ENCODE measurements at regions of chr16 and their contacts with region 1.

Region 1: DNA sequence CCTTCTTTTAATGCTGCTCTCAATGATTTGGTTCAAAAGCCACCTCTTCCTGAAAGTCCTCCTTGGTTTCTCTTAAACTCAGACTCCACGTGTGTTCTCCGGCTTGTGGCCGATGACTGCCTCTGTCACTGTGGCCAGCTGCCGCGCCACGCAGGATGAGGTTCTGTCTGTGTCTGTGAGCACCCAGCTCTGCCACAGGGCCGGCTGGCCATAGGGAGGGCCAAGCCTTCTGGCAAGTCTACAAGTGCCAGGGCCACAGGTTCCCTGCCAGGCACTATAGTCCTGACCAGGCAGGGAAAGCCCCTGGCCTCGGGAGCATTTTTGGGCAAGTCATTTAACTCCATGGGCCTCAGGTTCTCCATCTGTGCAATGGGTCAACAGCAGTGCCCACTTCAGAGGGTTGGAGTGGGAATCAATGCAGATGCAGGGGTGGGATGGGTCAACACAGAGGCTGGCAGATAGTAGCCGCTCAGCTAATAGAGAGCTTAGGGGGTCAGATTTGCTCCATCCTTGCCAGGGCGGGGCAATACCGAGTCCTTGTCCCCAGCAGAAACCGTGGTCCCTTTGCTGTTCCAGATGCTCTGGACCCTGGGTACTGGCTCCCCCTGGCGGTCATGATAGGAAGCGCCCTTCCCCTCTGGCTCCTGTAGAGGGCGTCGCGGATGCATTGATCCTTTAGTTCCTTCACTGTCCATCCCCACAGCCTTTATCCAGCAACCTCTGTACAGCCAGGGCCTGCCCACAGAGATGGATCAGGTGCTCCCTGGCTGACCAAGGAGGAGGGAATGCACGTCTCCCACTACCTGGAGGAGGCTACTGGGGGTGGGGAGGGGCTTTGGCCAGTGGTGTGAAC is 19.3 kb upstream of the ADGRG3 start:
- DNase-seq: peak; percentile 69 to 82
- ATAC-seq: peak; percentile 70 to 77 (median 76)
- H3K4me3 ChIP-seq: no peak overlapping the region
- H3K27ac ChIP-seq: peak overlapping the region; percentile 50
- H3K4me1 ChIP-seq: no peaks in the 10 kb centered on the region
- H3K27me3 ChIP-seq: peaks cover 0 to 5% (median 0%) of the 10 kb centered on the region in 3 donors
- CTCF ChIP-seq: peak; percentile 95

Region 2: GRCh38 chr16:57576429-57576870 is 72.4 kb before region 1 on chr16:
- intact Hi-C with region 1: loop called in 1 of 2 experiments (anchors 5 kb)
- DNase-seq: peak; percentile 67 to 82
- ATAC-seq: peak; percentile 62 to 81 (median 70)
- H3K4me3 ChIP-seq: no peak overlapping the region
- H3K27ac ChIP-seq: no peak overlapping the region
- H3K4me1 ChIP-seq: no peaks in the 10 kb centered on the region
- H3K27me3 ChIP-seq: peaks cover 0 to 6% (median 3%) of the 10 kb centered on the region in 3 donors
- CTCF ChIP-seq: peak; percentile 84

Region 3: DNA sequence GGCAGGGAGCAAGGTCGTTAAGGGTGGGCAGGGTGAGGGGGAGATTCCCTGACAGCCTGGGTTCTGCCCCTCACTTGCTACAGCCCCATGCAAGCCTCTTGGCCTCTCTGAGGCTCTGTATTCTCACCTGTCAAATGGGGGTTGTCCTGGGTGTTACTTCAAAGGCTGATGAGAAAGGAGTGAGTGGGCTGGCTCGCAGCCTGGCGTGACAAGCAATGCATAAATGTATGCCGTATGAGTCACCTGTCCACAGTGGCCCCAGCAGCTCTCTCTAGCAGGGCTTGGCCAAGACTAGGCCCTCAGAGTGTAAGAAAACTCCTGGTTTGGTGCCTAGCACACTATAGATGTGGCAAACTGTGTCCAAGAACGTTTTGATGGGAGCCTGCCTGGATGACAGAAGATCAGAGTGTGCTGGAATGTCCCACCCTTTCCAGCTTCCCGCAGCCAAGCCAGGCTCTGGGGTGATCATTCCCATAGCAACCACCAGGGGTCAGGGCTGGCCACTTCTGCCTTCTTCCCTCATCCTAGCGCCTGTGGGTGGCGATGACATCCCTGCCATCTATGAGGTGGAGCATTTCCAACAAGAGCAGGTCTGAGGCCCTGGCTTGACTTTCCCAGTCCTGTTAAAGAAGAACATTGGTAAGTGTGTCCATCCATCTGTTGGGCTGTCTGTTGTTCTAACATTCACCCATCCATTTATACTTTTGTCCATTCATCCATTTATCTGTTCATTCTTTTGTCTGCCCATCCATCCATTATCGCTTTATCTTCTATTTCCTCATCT is 57.5 kb before region 1 on chr16:
- intact Hi-C with region 1: loop called (anchors 5 kb)
- DNase-seq: peak; percentile 61 to 71
- ATAC-seq: peak; percentile 66 to 87 (median 85)
- H3K4me3 ChIP-seq: no peak overlapping the region
- H3K27ac ChIP-seq: no peak overlapping the region
- H3K4me1 ChIP-seq: no peaks in the 10 kb centered on the region
- H3K27me3 ChIP-seq: peaks cover 0 to 7% (median 0%) of the 10 kb centered on the region in 3 donors
- CTCF ChIP-seq: peak; percentile 79

Region 4: DNA sequence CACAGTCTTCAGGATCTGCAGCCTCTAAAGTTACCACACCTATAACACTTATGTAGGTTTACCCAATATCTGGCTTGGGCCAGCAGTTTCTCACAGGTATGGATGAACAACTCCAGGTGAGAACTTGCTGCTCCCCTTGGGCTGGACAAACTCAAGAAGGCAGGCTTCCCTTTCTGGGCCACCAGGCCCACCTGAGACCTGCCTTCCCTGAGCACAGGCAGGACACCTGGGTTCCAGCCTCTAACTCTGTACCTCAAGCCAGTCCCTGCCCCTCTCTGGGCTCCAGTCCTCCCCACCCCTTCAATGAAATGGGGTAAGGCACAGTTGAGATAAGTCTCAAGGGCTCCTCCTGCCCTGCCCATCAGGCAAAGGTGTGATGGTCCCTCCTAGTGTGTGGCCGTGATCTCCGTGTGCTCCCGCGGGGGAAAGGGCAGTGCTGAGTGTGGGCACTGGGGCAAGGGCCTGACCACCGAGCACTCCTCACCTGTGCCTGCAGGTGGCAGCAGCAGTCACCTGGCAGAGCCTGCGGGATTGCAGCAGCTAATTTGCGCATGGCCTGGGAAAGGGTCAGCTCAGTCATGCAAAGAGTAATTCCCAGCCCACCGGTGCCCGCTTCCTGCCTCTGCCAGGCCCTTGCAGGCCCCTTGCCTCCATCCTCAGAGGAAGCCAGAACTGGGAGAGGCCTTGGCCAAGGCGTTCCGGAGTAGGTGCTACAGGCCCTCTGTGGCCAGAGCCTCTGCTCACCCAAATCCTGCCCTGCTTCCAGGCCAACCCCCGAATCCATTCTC is 48.6 kb before region 1 on chr16:
- intact Hi-C with region 1: loop called in 1 of 2 experiments (anchors 2 kb)
- DNase-seq: peak in 1 of 2 donors; percentile 72
- ATAC-seq: peak; percentile 57 to 69 (median 66)
- H3K4me3 ChIP-seq: no peak overlapping the region
- H3K27ac ChIP-seq: no peak overlapping the region
- H3K4me1 ChIP-seq: peaks cover 4% of the 10 kb centered on the region
- H3K27me3 ChIP-seq: peaks cover 0 to 14% (median 0%) of the 10 kb centered on the region in 3 donors
- CTCF ChIP-seq: peak; percentile 52

Region 5: DNA sequence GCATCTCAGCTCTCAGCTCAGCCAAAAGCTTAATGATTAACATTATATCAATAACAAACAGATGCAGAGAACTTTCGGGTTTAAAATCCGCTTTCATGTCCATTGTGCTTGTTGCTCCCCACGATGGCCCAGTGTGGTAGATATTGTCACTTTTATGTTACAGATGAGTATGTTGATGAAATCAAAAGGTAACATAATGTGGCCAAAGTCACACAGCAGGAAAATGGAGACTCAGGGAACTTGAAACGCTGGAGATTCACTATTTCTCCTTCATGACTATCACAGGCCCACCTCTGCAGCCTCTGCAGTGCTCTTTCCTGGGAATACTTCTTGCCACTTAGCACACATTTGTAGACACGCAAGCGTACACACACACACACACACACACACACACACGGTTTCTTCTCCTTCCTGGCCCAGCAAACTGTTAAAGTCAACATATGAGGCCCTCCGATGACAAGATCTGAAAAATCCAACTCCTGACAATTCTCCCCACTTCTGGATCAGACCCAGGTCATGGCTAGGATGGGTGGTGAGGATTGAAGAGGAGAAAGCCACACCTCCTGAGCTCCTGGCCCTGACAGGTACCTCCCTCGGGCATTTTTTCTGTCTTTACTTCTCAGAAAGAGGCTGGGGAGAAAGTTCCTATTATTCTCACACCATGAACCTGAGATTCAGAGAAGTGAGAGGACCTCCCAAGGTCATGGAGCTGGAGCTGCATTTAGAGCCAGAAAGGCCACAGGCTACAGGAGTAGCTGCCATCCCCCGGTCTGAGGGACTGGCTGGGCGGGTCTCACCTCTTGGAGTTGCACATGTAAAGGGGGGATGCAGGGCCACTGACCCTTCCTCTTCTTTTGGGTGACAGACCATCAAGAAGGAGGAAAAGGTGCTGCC is 55.4 kb after region 1 on chr16:
- intact Hi-C with region 1: no loop called
- DNase-seq: no peak
- ATAC-seq: no peak
- H3K4me3 ChIP-seq: no peak overlapping the region
- H3K27ac ChIP-seq: no peak overlapping the region
- H3K4me1 ChIP-seq: no peaks in the 10 kb centered on the region
- H3K27me3 ChIP-seq: peaks cover 0 to 2% (median 0%) of the 10 kb centered on the region in 3 donors
- CTCF ChIP-seq: no peak

Measured in psoas muscle (tissue), 8 donors.